PC-3 (cell line): ENCODE measurements at regions of chr14 and their contacts with region 1.

Region 1: GRCh38 chr14:54175298-54175942 is 218.8 kb upstream of the BMP4 start:
- DNase-seq: peak; percentile 100
- ATAC-seq: peak; percentile 61
- H3K4me3 ChIP-seq: no peak overlapping the region
- H3K27ac ChIP-seq: no peak overlapping the region
- H3K4me1 ChIP-seq: peaks cover 73% of the 10 kb centered on the region
- H3K27me3 ChIP-seq: no peaks in the 10 kb centered on the region
- CTCF ChIP-seq: peak; percentile 100

Region 2: GRCh38 chr14:53432378-53432802 is 743.0 kb before region 1 on chr14:
- CTCF ChIA-PET with region 1: no interaction called
- POLR2A ChIA-PET with region 1: no interaction called
- intact Hi-C with region 1: loop called (anchors 1 kb)
- DNase-seq: peak; percentile 77
- ATAC-seq: peak; percentile 95
- H3K4me3 ChIP-seq: no peak overlapping the region
- H3K27ac ChIP-seq: no peak overlapping the region
- H3K4me1 ChIP-seq: peaks cover 18% of the 10 kb centered on the region
- H3K27me3 ChIP-seq: no peaks in the 10 kb centered on the region
- CTCF ChIP-seq: peak; percentile 96

Region 3: GRCh38 chr14:53663709-53664108 is 511.7 kb before region 1 on chr14:
- CTCF ChIA-PET with region 1: no interaction called
- POLR2A ChIA-PET with region 1: no interaction called
- intact Hi-C with region 1: loop called (anchors 5 kb)
- DNase-seq: peak; percentile 53
- ATAC-seq: peak; percentile 93
- H3K4me3 ChIP-seq: no peak overlapping the region
- H3K27ac ChIP-seq: no peak overlapping the region
- H3K4me1 ChIP-seq: no peaks in the 10 kb centered on the region
- H3K27me3 ChIP-seq: peaks cover 2% of the 10 kb centered on the region; the same call in 1 of the 2 replicates
- CTCF ChIP-seq: peak; percentile 70

Region 4: DNA sequence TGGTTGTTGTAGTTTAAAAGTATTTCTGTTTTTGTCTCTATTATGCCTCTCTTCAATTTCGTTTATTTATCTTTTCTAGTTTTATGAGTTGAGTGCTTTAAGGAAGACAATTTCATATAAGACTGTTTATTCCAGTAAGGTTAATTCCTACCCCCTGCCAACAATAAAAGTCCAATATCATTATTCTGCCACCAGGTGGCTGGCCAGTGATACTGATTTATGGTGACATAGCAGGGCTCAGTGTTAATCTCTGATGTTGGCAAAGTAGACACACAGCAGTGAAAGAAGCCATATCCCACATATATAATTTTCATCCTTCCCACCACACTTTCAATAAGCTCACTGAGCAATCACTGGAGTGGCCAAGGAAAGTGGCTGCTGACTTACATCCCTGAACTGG is 149.8 kb before region 1 on chr14:
- CTCF ChIA-PET with region 1: interaction called, 4 read pairs
- POLR2A ChIA-PET with region 1: no interaction called
- intact Hi-C with region 1: loop called (anchors 1 kb)
- DNase-seq: peak; percentile 94
- ATAC-seq: peak; percentile 96
- H3K4me3 ChIP-seq: no peak overlapping the region
- H3K27ac ChIP-seq: no peak overlapping the region
- H3K4me1 ChIP-seq: peaks cover 13% of the 10 kb centered on the region
- H3K27me3 ChIP-seq: no peaks in the 10 kb centered on the region
- CTCF ChIP-seq: peak; percentile 97

Region 5: GRCh38 chr14:54108481-54109471 is 66.6 kb before region 1 on chr14:
- CTCF ChIA-PET with region 1: interaction called, 13 read pairs
- POLR2A ChIA-PET with region 1: interaction called, 9 read pairs
- intact Hi-C with region 1: no loop called
- DNase-seq: peak; percentile 100
- ATAC-seq: peak; percentile 56
- H3K4me3 ChIP-seq: peak overlapping the region; percentile 6; the same call in 1 of the 2 replicates
- H3K27ac ChIP-seq: peak overlapping the region; percentile 88
- H3K4me1 ChIP-seq: peaks cover 75% of the 10 kb centered on the region
- H3K27me3 ChIP-seq: no peaks in the 10 kb centered on the region
- CTCF ChIP-seq: no peak

Region 6: GRCh38 chr14:54329082-54329695 is 153.8 kb after region 1 on chr14:
- CTCF ChIA-PET with region 1: interaction called, 28 read pairs
- POLR2A ChIA-PET with region 1: no interaction called
- intact Hi-C with region 1: loop called (anchors 1 kb)
- DNase-seq: peak; percentile 96
- ATAC-seq: peak; percentile 98
- H3K4me3 ChIP-seq: no peak overlapping the region
- H3K27ac ChIP-seq: no peak overlapping the region
- H3K4me1 ChIP-seq: peaks cover 17% of the 10 kb centered on the region
- H3K27me3 ChIP-seq: no peaks in the 10 kb centered on the region
- CTCF ChIP-seq: peak; percentile 100